Activated CD4-positive, alpha-beta T cell treated with anti-CD3 and anti-CD28 coated beads for 36 hours (primary cell): ENCODE measurements at regions of chr9 and their contacts with region 1.

Region 1: DNA sequence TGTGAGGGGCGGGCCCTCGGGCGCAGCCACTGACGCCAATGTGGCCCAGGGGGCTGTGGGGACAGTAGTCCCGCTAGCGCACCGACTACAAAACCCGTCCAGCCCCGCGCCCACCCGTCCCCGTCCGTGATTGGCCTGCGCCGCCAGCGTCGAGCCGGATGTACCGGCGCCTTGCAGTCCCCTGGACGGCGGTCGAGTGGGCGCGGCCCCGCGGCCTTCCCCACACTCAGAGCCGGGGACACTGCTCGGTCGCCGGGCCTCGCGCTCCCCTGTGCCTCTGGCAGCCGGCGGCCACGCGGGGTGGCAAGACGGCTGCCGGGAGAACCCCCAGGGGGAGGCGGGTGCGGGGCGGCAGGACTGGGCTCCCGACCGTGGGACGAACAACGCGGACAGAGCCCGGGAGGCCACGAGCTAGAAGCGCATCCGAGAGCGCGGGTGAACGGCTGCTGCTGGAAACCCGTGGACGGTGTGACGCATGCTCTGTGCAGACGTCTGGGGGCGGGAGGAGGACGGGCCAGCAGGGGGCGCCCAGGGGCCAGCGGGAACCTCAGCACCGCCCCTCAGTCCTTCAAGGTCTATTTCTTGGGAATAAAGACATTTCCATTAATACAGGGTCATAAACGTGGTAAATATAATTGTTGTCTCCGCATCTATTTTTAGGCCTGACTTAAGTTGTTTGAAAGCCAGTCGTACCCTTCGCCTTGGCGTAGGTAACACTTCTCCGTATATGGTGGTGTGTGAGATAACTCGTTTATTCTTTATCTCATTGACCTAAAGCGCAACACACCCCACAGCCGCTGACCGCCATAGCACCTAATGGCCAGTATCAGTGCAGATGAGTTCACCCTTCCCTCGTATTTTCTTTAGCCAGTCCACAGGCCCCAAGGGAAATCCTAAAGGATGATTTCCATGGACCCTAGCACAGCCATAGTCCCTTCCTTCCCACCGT is 629 bp upstream of the BICD2 start:
- DNase-seq: peak; percentile 99
- ATAC-seq: peak; percentile 95
- H3K4me3 Mint-ChIP-seq: peak overlapping the region; percentile 89
- H3K27ac Mint-ChIP-seq: peak overlapping the region; percentile 90
- H3K4me1 Mint-ChIP-seq: peaks cover 47% of the 10 kb centered on the region
- H3K27me3 Mint-ChIP-seq: no peaks in the 10 kb centered on the region

Region 2: DNA sequence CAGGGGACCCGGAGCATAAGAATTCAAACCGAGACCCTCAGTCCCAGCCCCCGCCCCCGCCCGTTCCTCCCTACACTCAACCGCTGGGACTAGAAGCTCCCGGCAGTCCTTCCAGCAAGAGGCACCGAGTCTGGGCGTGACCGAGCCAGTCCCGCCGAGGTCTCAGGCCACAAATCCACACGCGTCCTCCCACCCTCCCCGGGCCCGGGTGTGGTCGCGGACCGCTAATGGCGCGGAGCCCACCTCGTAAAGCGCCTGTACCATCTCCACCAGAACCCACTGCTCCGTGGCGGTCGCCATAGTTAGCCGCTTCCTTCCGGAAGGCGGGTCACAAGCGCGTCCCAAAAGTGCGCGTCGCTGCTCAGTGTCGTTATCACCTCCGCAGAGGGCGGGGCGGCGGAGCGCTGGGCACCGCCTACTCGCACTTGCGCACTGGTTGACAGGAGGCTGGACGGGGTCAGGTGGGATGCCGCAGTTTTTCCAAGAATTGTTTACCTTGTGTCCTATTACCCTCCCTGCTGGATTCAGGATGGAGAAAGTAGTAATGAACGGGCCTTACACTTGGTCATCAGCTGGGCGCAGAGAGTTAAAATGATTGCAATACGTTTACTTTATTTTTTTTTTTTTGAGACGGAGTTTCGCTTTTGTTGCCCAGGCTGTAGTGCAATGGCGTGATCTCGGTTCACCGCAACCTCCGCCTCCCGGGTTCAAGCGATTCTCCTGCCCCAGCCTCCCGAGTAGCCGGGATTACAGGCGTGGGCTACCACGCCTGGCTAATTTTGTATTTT is 650.0 kb before region 1 on chr9 and contains the start of gene SPTLC1:
- CTCF ChIA-PET with region 1: no interaction called
- POLR2A ChIA-PET with region 1: no interaction called
- intact Hi-C with region 1: loop called in 1 of 2 experiments (anchors 1 kb)
- DNase-seq: peak; percentile 97
- ATAC-seq: peak; percentile 99
- H3K4me3 Mint-ChIP-seq: peak within 1 kb of the TSS; percentile 95
- H3K27ac Mint-ChIP-seq: peak within 1 kb of the TSS; percentile 98
- H3K4me1 Mint-ChIP-seq: peaks cover 26% of the 10 kb centered on the region
- H3K27me3 Mint-ChIP-seq: no peaks in the 10 kb centered on the region
- total RNA-seq, gene SPTLC1: 45.9 to 46.6 TPM

Region 3: DNA sequence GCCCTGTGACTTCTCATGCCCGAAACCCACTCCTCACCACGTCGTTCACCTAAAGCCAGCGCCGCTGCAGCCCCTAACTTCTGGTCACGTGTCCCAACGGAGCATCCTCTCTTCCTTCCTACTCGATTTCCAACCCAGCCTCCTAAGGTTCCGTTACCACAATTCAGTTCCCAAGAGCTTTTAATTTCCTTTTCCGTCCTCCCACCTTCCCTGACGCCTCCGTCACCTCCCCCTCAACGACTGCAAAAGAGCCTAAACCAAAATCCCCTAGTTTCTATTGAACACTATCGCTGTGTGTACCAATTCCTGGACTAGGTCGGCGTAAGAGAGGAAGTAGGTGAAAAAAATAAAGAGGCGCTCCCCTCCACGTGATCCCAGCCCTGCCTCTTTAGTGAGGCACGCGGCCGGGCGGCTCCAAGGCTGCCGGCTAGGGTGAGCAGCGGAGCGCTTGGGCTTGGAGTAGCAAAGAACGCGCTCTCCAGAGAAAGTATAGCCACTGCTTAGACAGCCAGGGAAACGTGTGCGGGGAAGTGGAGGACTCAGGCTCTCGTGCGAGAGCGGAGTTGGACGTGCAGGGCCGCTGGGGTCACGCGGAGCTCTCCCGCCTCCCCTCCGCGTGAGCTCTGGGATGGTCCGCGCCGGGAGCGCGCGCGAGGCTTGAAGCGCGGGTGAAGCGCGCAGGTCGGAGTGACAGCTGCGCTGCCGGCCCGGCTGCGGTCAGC is 439.8 kb before region 1 on chr9 and contains the starts of genes CENPP and NOL8:
- CTCF ChIA-PET with region 1: no interaction called
- POLR2A ChIA-PET with region 1: no interaction called
- intact Hi-C with region 1: loop called in 1 of 2 experiments (anchors 1 kb)
- DNase-seq: peak; percentile 90
- ATAC-seq: peak; percentile 95
- H3K4me3 Mint-ChIP-seq: peak within 1 kb of the TSS; percentile 89
- H3K27ac Mint-ChIP-seq: peak within 1 kb of the TSS; percentile 97
- H3K4me1 Mint-ChIP-seq: peaks cover 37% of the 10 kb centered on the region
- H3K27me3 Mint-ChIP-seq: no peaks in the 10 kb centered on the region
- total RNA-seq, gene CENPP: 22.8 to 32.3 TPM
- total RNA-seq, gene NOL8: 57.7 to 80.2 TPM

Region 4: DNA sequence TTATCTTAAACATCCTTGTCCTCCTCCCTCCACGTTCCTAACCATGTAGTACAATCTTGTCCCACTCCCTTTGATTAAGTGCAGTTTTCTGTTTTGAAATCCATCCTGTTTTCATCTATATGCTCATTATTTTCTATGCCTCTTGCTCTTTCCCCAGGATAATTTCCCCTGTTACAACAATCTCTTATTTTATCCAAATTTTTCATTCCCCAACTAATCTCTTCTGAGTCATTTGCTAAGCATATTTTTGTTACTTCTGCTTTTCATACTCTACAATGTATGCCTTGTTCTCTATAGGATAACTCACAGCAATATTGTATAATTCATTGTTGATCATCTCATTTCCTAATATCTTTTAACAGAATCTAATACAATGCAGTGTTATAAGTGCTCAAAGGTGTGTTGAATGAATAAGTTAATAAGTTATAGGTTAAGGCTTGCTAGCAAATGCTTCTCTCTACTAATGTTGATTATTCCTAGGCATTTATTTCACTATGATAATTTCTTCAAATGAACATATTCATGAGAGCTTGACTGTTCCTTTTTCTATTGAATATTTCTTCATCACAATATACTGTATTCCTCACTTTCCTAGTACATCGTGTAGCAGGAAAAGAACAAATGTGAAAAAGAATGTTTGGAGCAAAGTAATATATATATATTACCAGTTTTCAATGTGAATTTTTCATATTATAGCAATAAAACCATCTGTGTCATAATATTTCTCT is 342.5 kb before region 1 on chr9:
- CTCF ChIA-PET with region 1: no interaction called
- POLR2A ChIA-PET with region 1: no interaction called
- intact Hi-C with region 1: no loop called
- DNase-seq: no peak
- ATAC-seq: no peak
- H3K4me3 Mint-ChIP-seq: no peak overlapping the region
- H3K27ac Mint-ChIP-seq: no peak overlapping the region
- H3K4me1 Mint-ChIP-seq: no peaks in the 10 kb centered on the region
- H3K27me3 Mint-ChIP-seq: no peaks in the 10 kb centered on the region

Region 5: DNA sequence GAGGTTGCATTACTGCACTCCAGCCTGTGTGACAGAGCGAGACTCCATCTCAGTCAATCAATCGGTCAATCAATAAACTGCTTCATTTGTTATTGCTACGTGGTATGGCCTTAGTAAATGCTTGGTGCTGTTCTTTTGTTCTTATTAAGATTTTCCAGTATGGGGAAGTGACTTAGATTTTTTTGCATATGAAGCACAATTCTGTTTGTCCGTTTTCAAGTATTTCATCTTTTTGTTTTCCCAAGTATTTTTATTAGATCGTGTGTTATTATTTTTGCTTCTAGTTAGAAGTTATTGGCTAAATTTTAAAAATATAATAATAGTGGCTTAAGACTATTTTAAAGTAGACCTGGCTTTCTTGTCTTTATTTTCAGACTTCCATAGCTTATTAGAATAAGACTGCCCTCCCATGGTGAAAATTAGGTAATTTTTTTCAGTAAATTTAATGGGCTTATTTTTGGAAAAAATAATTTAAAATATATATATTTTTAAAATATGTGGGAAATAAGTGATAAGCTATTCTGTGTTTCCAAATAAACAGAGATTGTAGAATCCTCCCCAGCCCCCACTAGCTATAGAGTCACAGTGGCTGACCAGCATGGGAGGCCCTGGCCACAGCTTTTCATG is 326.2 kb before region 1 on chr9:
- CTCF ChIA-PET with region 1: no interaction called
- POLR2A ChIA-PET with region 1: no interaction called
- intact Hi-C with region 1: no loop called
- DNase-seq: no peak
- ATAC-seq: no peak
- H3K4me3 Mint-ChIP-seq: no peak overlapping the region
- H3K27ac Mint-ChIP-seq: no peak overlapping the region
- H3K4me1 Mint-ChIP-seq: peaks cover 3% of the 10 kb centered on the region
- H3K27me3 Mint-ChIP-seq: no peaks in the 10 kb centered on the region

Region 6: DNA sequence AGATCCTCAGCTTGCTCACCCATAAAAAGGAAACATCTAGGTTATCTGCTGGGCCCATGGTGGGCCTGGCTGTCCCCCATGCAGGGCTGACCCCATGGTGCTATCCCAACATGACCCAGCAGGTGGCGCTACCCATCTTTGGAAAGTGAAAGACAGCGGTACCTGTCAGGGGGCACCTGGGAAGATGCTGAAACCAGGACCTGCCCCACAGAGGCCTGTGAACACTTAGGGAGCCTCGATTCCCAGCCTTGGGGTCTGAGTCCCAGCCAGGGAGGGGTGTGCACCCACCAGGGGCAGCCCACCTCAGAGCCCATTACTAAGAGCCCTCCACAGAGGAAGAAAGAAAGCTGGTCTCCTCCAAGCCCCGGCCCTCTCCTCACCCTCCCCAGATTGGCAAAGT is 48.7 kb before region 1 on chr9:
- CTCF ChIA-PET with region 1: interaction called, 3 read pairs
- POLR2A ChIA-PET with region 1: no interaction called
- intact Hi-C with region 1: loop called (anchors 1 to 2 kb)
- DNase-seq: peak; percentile 88
- ATAC-seq: peak; percentile 71
- H3K4me3 Mint-ChIP-seq: no peak overlapping the region
- H3K27ac Mint-ChIP-seq: peak overlapping the region; percentile 42
- H3K4me1 Mint-ChIP-seq: peaks cover 19% of the 10 kb centered on the region
- H3K27me3 Mint-ChIP-seq: no peaks in the 10 kb centered on the region

Region 7: GRCh38 chr9:92808726-92809451 is 43.6 kb after region 1 on chr9:
- CTCF ChIA-PET with region 1: interaction called, 3 read pairs
- POLR2A ChIA-PET with region 1: no interaction called
- intact Hi-C with region 1: loop called in 1 of 2 experiments (anchors 1 kb)
- DNase-seq: peak; percentile 82
- ATAC-seq: peak; percentile 57
- H3K4me3 Mint-ChIP-seq: peak overlapping the region; percentile 75
- H3K27ac Mint-ChIP-seq: peak overlapping the region; percentile 72
- H3K4me1 Mint-ChIP-seq: peaks cover 5% of the 10 kb centered on the region
- H3K27me3 Mint-ChIP-seq: peaks cover 46% of the 10 kb centered on the region

Region 8: DNA sequence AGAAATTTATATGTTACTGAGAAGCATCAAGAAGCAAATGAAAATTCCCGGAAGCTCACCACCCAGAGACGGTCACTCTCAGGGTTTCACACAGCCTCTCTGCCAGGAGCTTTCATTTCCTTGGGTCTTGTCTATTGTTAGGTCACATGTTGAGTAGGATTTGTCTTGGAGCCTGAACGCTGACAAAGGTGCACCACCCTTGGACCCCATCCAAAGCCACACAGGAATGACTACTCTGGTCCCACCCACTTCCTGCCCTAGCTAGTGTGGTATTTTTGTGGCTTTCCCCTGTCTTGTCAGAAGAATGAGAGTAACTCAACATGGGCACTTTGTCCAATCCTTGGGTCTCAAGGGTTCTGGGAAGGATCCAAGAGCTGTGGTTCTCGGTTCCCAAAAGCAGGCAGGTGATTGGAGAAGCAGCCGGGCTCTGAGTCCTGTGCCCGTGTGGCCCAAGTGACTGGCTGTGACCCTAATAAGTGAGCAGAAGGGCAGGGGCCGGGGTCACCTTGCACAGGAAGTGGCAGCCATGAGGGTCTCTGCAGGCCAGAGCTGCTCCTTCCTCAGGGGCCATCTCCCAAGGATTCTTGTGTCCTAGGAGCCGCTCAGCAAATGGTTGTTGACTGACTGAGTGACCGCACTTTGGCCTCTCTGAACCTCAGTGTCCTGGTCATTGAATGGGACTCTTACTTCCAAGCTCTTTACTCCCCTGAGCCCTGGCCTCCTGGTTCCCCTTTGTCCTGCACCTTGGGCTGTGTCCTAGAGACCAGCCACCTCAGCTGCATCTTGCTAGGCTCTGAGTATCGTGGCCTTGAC is 189.0 kb after region 1 on chr9:
- CTCF ChIA-PET with region 1: no interaction called
- POLR2A ChIA-PET with region 1: no interaction called
- intact Hi-C with region 1: loop called in 1 of 2 experiments (anchors 1 kb)
- DNase-seq: peak; percentile 89
- ATAC-seq: peak; percentile 85
- H3K4me3 Mint-ChIP-seq: peak overlapping the region; percentile 66
- H3K27ac Mint-ChIP-seq: peak overlapping the region; percentile 97
- H3K4me1 Mint-ChIP-seq: peaks cover 78% of the 10 kb centered on the region
- H3K27me3 Mint-ChIP-seq: no peaks in the 10 kb centered on the region

Region 9: GRCh38 chr9:93566408-93567270 is 801.4 kb after region 1 on chr9:
- CTCF ChIA-PET with region 1: no interaction called
- POLR2A ChIA-PET with region 1: no interaction called
- intact Hi-C with region 1: loop called in 1 of 2 experiments (anchors 1 kb)
- DNase-seq: peak; percentile 99
- ATAC-seq: peak; percentile 98
- H3K4me3 Mint-ChIP-seq: peak overlapping the region; percentile 83
- H3K27ac Mint-ChIP-seq: peak overlapping the region; percentile 89
- H3K4me1 Mint-ChIP-seq: peaks cover 24% of the 10 kb centered on the region
- H3K27me3 Mint-ChIP-seq: no peaks in the 10 kb centered on the region